Heart left ventricle (tissue), 16 donors: ENCODE measurements at regions of chr3 and their contacts with region 1.

Region 1: DNA sequence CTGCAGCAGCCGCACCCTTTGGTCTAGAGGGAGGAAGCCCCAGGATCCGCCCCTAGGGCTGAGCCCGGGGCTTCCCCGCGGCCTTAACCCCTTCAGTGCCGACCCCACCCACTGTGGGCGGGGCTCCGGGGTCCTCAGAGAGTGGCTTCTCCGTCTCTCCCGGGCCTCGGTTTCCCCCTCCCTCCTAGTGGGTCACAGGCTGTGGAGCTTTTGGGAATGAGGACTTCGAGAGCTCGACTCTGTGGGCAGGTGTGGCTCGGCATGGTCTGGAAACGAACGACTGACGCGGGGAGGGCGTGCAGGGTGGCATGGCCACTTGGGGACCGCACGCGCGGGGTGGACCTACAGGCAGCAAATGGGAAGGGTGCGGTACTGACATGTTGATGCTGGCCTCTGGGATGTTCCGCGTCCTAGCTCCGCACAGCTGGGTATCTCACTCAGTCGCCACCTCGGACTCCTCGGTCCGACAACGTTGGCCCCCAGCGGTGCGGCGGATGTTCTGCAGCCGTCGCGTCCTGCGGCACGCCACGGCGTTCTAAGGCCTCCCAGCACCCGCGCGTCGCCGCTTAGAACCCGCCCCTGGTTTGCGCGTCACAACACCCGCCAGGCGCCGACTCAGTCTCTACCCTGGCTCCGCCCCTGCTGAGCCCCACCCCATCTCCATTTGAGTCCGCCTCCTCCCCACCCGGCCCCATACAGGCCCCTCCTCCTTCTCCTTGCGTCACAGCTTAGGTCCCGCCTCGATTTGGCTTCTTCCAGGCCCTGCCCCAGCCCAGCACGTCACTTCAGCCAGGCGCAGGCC is at the starts of genes HYAL3 and NAA80:
- DNase-seq: peak; percentile 99
- ATAC-seq: peak; percentile 87 to 91 (median 88)
- H3K4me3 ChIP-seq: peak within 1 kb of the TSS; percentile 16 to 81 (median 67)
- H3K27ac ChIP-seq: peak within 1 kb of the TSS; percentile 75 to 97 (median 94)
- H3K4me1 ChIP-seq: peaks cover 11 to 58% (median 43%) of the 10 kb centered on the region in 12 donors
- H3K27me3 ChIP-seq: no peaks in the 10 kb centered on the region
- CTCF ChIP-seq: peak in 8 of 12 donors; percentile 17 to 48 (median 39)
- POLR2A ChIP-seq: peak; percentile 88 to 98
- total RNA-seq, gene HYAL3: 1.0 to 3.2 (median 1.6) TPM
- total RNA-seq, gene NAA80: 8.0 to 13.9 (median 9.8) TPM

Region 2: DNA sequence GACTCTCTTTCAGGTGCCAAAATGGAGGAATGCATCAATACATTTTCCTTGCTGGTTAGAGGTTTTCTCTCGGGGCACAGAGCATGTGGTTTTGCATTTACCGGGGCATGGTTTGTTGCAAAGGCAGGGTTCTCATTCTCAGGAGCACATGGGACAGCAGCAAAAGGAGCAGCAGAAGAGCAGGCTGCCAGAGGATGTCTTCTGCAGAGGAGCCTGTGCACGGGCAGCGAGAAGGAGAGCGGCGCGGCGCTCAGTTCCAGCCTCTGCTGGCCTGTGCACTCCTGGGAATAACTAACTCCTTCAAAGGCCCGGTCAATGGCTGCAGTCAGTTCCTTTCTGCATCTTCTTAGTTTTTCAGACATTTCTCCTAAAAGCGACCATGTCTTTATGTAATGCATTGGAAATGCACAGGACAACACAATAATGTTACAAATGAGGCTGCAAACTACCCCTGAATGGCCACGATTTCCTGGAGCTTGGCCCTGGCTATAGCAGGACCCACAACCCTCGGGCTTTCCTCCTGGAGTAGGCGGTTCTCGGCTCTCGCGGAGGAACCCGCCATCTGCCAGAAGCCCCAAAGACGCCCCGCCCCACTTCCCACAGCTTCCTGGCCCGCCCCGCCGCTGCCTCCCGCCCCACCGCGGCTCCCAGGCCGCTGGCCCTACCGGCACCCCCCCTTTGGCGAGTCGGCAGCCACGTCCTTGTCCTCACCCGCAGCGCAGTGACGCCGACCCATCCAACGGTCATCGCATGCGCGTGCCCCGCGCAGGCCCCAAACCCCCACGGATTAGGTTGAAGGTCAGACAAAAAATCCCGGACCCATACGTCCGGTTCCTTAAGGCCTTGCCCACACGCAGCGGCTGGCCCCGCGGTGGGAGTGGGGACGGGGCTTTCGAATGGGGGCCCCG is 1022.3 kb before region 1 on chr3 and contains the start of gene C3orf62:
- intact Hi-C with region 1: no loop called
- DNase-seq: peak; percentile 95 to 96 (median 96)
- ATAC-seq: peak; percentile 85 to 97 (median 96)
- H3K4me3 ChIP-seq: peak within 1 kb of the TSS; percentile 25 to 64 (median 53)
- H3K27ac ChIP-seq: peak within 1 kb of the TSS; percentile 89 to 99 (median 96)
- H3K4me1 ChIP-seq: peaks cover 0 to 43% (median 31%) of the 10 kb centered on the region in 12 donors
- H3K27me3 ChIP-seq: no peaks in the 10 kb centered on the region
- CTCF ChIP-seq: no peak
- POLR2A ChIP-seq: peak in 1 of 2 donors; percentile 26
- total RNA-seq, gene C3orf62: 1.3 to 5.6 (median 2.9) TPM

Region 3: GRCh38 chr3:49929331-49930240 is 369.5 kb before region 1 on chr3 and contains the start of gene MON1A:
- intact Hi-C with region 1: loop called in 1 of 10 experiments (anchors 10 kb)
- DNase-seq: peak; percentile 97 to 98 (median 97)
- ATAC-seq: peak; percentile 95 to 100 (median 99)
- H3K4me3 ChIP-seq: peak within 1 kb of the TSS; percentile 66 to 93 (median 82)
- H3K27ac ChIP-seq: peak within 1 kb of the TSS; percentile 72 to 94 (median 89)
- H3K4me1 ChIP-seq: peaks cover 0 to 31% (median 21%) of the 10 kb centered on the region in 12 donors
- H3K27me3 ChIP-seq: no peaks in the 10 kb centered on the region
- CTCF ChIP-seq: peak in 9 of 12 donors; percentile 11 to 53 (median 28)
- POLR2A ChIP-seq: peak in 1 of 2 donors; percentile 76
- total RNA-seq, gene MON1A: 4.8 to 13.0 (median 7.7) TPM

Region 4: GRCh38 chr3:50254577-50255250 is 44.3 kb before region 1 on chr3:
- intact Hi-C with region 1: loop called in 1 of 10 experiments (anchors 5 kb)
- DNase-seq: peak; percentile 78 to 88 (median 86)
- ATAC-seq: peak; percentile 50 to 84 (median 58)
- H3K4me3 ChIP-seq: peak overlapping the region in 2 of 12 donors; percentile 7 to 11
- H3K27ac ChIP-seq: peak overlapping the region; percentile 82 to 99 (median 92)
- H3K4me1 ChIP-seq: peaks cover 0 to 90% (median 66%) of the 10 kb centered on the region in 12 donors
- H3K27me3 ChIP-seq: no peaks in the 10 kb centered on the region
- CTCF ChIP-seq: no peak
- POLR2A ChIP-seq: peak in 1 of 2 donors; percentile 38

Region 5: DNA sequence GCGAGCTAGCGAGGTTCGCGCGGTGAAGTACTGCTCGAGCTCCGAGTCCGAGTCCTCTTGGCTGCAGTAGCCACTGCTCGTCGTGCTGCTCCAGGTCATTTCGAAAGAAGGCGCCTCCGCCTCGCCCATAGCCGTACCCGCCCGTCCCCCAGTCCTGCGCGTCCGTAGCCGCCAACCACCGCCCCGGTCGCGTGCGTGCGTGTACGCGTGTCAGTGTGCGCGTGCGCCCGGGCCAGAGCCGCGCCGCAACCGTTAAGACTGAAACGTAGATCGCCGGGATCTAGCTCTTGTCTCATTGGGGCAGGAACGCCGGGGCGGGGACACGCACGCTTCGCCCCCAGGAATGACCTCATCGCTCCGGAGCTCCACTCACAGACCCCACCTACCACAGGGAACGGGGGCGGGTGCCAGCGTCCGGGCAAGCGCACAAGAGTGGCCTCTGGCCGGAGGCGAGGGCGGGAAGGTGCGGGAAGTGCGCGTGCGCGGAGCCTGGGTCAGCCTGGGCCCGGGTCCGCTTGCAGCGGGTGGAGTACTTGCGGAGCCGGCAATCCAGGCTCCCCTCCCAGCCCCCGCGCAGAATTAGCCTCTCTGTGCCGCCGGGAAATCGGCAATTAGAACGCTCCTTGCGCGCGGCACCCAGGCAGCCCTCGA is 38.3 kb after region 1 on chr3:
- intact Hi-C with region 1: loop called in 1 of 10 experiments (anchors 1 kb)
- DNase-seq: peak; percentile 100
- ATAC-seq: peak; percentile 85 to 90 (median 86)
- H3K4me3 ChIP-seq: peak overlapping the region; percentile 70 to 97 (median 92)
- H3K27ac ChIP-seq: peak overlapping the region; percentile 92 to 100 (median 98)
- H3K4me1 ChIP-seq: peaks cover 13 to 88% (median 72%) of the 10 kb centered on the region in 12 donors
- H3K27me3 ChIP-seq: peaks cover 0 to 4% (median 0%) of the 10 kb centered on the region in 9 donors
- CTCF ChIP-seq: no peak
- POLR2A ChIP-seq: peak; percentile 64 to 93